ENCODE measurements at regions of chr18 and their contacts with region 1.

Region 1: GRCh38 chr18:2104620-2105462 is 466.5 kb downstream of the METTL4 start:
- DNase-seq: peak; percentile 63
- H3K4me3 Mint-ChIP-seq: no peak overlapping the region
- H3K27ac Mint-ChIP-seq: no peak overlapping the region
- H3K4me1 Mint-ChIP-seq: no peaks in the 10 kb centered on the region
- H3K27me3 Mint-ChIP-seq: peaks cover 3% of the 10 kb centered on the region

Region 2: GRCh38 chr18:864872-865273 is 1240.0 kb before region 1 on chr18:
- CTCF ChIA-PET with region 1: no interaction called
- POLR2A ChIA-PET with region 1: no interaction called
- intact Hi-C with region 1: no loop called
- DNase-seq: peak; percentile 77
- H3K4me3 Mint-ChIP-seq: no peak overlapping the region
- H3K27ac Mint-ChIP-seq: no peak overlapping the region
- H3K4me1 Mint-ChIP-seq: peaks cover 4% of the 10 kb centered on the region
- H3K27me3 Mint-ChIP-seq: peaks cover 10% of the 10 kb centered on the region

Region 3: DNA sequence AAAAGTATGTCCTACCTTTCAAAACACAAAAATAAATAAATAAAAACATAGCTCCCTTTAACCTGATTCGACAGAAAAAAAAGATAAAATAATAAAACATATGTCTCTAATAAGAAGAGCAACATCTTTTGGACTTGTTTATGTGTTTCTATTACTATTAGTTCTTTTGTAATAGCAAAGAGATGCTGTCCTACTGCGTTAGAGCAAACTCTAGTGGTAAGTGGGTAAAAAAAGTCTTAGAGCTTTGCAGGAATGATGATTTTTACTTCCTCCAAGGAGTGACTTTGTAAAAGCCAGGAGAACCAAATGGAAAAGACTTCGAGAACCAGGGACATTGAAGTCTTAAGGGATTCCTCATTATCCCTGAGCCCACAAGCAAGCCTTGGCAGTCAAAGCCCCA is 16.4 kb after region 1 on chr18:
- CTCF ChIA-PET with region 1: interaction called, 16 read pairs
- POLR2A ChIA-PET with region 1: no interaction called
- intact Hi-C with region 1: no loop called
- DNase-seq: no peak
- H3K4me3 Mint-ChIP-seq: no peak overlapping the region
- H3K27ac Mint-ChIP-seq: no peak overlapping the region
- H3K4me1 Mint-ChIP-seq: no peaks in the 10 kb centered on the region
- H3K27me3 Mint-ChIP-seq: no peaks in the 10 kb centered on the region

Region 4: DNA sequence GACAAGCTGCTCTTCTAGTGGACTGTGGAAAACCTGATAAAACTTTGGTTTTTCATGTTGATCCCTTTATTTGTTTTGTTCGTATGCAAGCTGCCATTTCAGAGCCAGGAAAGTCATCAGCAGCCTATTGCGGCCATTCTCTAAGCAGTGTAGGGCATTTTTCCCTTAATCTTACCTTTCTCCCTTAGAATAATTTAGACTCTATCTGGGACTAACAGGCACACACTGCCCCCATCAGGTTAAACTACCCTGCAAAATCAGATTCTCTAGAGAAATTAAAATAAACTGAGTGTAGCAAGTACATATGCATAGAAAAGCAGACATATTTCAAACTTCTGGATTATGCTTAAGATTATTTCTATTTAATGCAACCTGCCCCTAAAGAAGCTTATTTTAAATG is 119.0 kb after region 1 on chr18:
- CTCF ChIA-PET with region 1: interaction called, 14 read pairs
- POLR2A ChIA-PET with region 1: no interaction called
- intact Hi-C with region 1: loop called (anchors 10 kb)
- DNase-seq: no peak
- H3K4me3 Mint-ChIP-seq: no peak overlapping the region
- H3K27ac Mint-ChIP-seq: no peak overlapping the region
- H3K4me1 Mint-ChIP-seq: no peaks in the 10 kb centered on the region
- H3K27me3 Mint-ChIP-seq: peaks cover 5% of the 10 kb centered on the region

Region 5: GRCh38 chr18:2540575-2540974 is 435.7 kb after region 1 on chr18:
- CTCF ChIA-PET with region 1: interaction called, 16 read pairs
- POLR2A ChIA-PET with region 1: no interaction called
- intact Hi-C with region 1: loop called (anchors 1 kb)
- DNase-seq: no peak
- H3K4me3 Mint-ChIP-seq: no peak overlapping the region
- H3K27ac Mint-ChIP-seq: no peak overlapping the region
- H3K4me1 Mint-ChIP-seq: peaks cover 2% of the 10 kb centered on the region
- H3K27me3 Mint-ChIP-seq: no peaks in the 10 kb centered on the region

Region 6: DNA sequence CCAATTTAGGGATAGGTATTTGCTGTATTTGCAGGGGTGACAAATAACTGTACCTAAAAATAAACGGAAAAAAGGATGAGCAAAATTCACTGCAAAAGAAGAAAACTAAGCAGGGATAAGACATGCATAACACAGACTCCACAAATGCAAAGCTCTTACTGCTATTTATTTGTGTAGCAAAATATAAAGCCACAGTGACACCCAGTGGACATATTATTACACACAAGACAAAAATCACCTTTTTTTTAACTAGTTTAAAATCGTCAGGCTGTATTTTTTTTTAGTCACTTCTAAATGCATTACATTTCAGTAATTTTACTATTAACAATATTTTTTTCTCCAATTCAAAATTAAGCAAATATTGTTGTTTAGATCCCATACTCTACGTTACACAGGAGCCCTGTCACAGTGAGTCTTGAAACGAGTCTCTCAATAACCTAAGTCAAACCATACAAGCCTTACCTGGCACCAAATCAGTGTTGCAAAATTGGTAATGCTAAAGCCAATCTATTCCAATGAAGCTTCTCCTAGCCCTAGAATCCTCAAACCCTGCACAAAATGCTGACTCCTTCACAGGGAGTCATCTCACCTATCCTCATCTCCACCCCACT is 442.7 kb after region 1 on chr18:
- CTCF ChIA-PET with region 1: interaction called, 16 read pairs
- POLR2A ChIA-PET with region 1: no interaction called
- intact Hi-C with region 1: loop called (anchors 1 kb)
- DNase-seq: no peak
- H3K4me3 Mint-ChIP-seq: no peak overlapping the region
- H3K27ac Mint-ChIP-seq: no peak overlapping the region
- H3K4me1 Mint-ChIP-seq: peaks cover 7% of the 10 kb centered on the region
- H3K27me3 Mint-ChIP-seq: no peaks in the 10 kb centered on the region